Sigmoid colon (tissue), 7 donors: ENCODE measurements at regions of chr15 and their contacts with region 1.

Region 1: DNA sequence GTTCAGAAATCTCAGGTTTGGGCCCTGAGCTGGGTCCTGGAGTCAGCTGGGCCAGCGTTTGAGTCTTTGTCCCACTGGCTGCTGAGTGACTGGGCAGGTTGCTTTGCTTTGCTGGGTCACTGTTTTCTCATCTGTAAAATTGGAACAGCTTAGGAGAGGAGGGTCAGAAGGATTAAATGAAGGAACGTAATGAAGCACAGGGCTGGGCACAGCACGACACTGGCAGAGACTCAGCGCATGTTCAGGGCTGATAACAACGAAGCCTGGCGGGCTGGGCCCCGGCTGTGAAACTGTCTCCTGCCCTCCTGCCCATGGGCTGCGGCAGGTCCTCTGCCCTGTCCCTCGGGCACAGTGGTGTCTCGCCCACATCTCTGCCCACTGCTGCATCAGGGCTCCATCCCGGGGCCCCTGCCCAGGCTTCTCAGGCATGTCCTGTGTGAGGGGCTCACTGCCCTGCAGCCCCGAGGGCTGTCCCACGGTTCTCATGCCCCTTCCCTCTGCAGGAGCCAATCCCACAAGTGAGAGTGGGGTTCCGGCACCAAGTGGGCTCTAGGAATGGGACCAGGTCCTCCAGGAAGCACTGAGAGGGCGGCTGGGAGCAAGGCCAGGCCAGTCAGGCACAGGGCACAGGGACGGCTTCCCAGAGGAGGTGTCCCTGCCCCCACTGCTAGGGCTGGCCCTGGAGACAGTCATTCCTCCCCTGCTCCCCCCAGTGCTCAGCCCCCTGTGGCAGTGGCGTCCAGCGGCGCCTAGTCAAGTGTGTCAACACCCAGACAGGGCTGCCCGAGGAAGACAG is 88.0 kb downstream of the TBC1D2B start:
- DNase-seq: peak; percentile 60
- H3K4me3 ChIP-seq: no peak overlapping the region
- H3K27ac ChIP-seq: peak overlapping the region in 2 of 4 donors; percentile 82 to 86
- H3K4me1 ChIP-seq: peaks cover 0 to 56% (median 53%) of the 10 kb centered on the region in 4 donors
- H3K27me3 ChIP-seq: no peaks in the 10 kb centered on the region
- CTCF ChIP-seq: no peak
- EP300 ChIP-seq: no peak
- POLR2A ChIP-seq: no peak

Region 2: GRCh38 chr15:77974098-77974414 is 15.4 kb before region 1 on chr15:
- intact Hi-C with region 1: loop called (anchors 2 kb)
- DNase-seq: peak; percentile 88
- H3K4me3 ChIP-seq: no peak overlapping the region
- H3K27ac ChIP-seq: peak overlapping the region in 3 of 4 donors; percentile 71 to 74 (median 73)
- H3K4me1 ChIP-seq: peaks cover 0 to 27% (median 25%) of the 10 kb centered on the region in 4 donors
- H3K27me3 ChIP-seq: no peaks in the 10 kb centered on the region
- CTCF ChIP-seq: no peak
- EP300 ChIP-seq: no peak
- POLR2A ChIP-seq: no peak

Region 3: DNA sequence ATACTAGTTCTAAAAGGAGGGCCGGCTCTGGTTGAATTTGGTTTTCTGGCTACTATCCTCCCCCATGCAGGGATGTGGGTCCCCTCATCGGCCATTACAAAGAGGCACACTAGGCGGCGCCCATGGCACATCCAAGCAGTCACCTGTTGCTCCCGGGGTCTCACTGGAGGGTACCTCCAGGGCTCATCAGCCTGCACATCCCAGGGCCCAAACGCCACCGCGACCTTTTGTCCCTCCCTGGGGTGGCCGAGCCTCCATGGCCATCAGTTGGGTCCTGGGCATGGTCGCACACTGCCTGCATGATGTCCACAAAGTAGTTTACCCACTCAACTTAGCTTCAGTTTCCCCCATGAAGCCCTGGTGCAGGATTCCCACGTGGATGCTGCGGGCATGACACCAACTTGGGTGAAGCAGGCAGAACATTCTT is 188.0 kb after region 1 on chr15:
- intact Hi-C with region 1: no loop called
- DNase-seq: no peak
- H3K4me3 ChIP-seq: no peak overlapping the region
- H3K27ac ChIP-seq: no peak overlapping the region
- H3K4me1 ChIP-seq: no peaks in the 10 kb centered on the region
- H3K27me3 ChIP-seq: no peaks in the 10 kb centered on the region
- CTCF ChIP-seq: peak; percentile 57 to 67 (median 66)
- EP300 ChIP-seq: no peak
- POLR2A ChIP-seq: no peak